Left colon (tissue), 2 donors: ENCODE measurements at regions of chr9 and their contacts with region 1.

Region 1: GRCh38 chr9:93682232-93682968 is 106.0 kb downstream of the PHF2 start:
- DNase-seq: peak; percentile 25 to 74
- ATAC-seq: peak; percentile 85

Region 2: GRCh38 chr9:93962561-93963440 is 280.4 kb after region 1 on chr9:
- intact Hi-C with region 1: loop called (anchors 5 kb)
- DNase-seq: peak; percentile 54 to 82
- ATAC-seq: peak; percentile 80